OCI-LY7 (cell line): ENCODE measurements at regions of chr3 and their contacts with region 1.

Region 1: DNA sequence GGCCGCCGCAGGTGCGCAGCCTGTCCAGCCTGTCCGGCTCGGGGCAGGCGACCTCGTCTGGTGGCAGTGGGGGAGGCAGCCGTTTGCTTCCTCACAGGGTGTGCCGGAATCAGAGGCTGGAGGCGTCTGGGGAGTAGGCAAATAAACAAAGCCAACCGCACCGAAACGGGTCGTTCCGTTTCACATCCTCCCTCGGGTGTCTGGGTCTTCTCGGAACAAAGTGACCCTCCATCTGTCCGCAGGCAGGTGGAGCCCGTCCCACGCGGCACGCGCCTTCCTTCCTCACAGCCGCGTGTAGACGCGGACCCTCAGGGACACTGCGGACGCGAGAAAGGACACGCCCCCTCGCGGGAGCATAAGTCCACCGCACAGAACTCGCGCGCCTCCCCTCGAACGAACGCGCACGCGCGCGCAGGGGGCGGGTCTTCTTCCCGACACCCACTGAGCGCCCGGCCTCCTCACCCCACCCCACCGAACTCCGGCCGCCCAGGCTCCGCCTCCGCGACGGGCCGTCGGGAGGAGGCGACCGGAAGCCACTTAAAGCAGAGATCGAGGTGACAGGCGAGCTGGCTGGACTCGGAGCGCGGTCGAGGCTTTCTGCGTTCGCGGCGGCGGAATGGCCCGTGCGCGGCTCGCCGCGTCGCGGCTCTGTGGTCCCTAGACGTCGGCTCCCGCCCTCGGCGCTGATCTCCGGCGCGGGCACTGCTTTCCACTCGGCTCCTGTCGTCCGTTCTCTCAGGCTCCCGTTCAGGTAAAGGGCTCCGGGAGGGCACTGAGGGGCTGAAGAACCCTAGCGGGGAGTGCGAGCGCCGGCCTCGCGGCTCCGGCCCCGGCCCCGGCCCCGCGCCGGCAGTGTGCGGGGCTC is at the start of gene TIPARP:
- DNase-seq: peak; percentile 97
- H3K4me3 ChIP-seq: peak within 1 kb of the TSS; percentile 96
- H3K27ac ChIP-seq: peak within 1 kb of the TSS; percentile 77
- H3K4me1 ChIP-seq: peaks cover 39% of the 10 kb centered on the region
- CTCF ChIP-seq: peak; percentile 79
- total RNA-seq, gene TIPARP: 9.7 and 10.0 TPM in 2 replicates

Region 2: DNA sequence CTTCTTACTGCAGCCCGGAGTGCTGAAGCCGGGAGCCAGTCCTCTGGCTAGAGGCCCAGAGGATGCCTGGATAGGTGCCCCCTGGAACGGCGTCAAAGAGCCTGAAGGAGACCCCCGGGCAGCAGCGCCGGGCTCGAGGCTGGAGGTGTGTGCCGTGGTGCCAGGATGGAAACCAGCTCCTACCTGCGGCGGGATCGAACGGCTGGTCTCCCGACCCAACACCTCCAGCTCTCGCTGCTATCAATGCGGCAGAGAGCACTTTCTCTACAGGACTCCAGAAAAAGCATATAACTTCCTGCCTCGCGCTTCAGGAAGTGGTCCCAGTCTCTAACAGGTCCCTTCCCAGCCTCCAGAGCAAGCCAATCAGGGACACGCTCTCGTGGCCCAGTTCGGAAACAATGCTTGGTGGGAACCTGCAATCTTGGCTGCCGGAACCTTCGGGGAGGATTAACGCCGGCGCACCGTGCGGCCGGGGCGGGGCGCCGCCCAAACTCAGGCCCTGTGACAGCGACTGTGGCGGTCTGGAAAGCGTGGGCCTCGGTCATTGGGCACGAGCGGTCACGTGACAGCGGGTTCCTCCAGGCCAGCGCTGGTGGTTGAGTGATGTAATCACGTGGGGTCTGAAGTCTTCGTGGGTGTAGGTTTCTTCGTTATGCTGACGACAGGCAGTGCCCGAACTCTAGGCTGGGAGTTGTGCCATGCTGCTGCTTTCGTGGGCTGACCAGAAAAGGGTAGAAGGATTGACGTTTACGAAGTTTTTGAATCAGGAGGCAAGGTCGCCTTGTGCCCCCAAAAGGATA is 819.9 kb before region 1 on chr3 and contains the start of gene SLC33A1:
- CTCF ChIA-PET with region 1: no interaction called
- POLR2A ChIA-PET with region 1: no interaction called
- intact Hi-C with region 1: loop called (anchors 10 kb)
- DNase-seq: peak; percentile 99
- H3K4me3 ChIP-seq: peak within 1 kb of the TSS; percentile 98
- H3K27ac ChIP-seq: peak within 1 kb of the TSS; percentile 61
- H3K4me1 ChIP-seq: peaks cover 23% of the 10 kb centered on the region
- CTCF ChIP-seq: no peak
- total RNA-seq, gene SLC33A1: 20.9 and 21.9 TPM in 2 replicates

Region 3: GRCh38 chr3:156816800-156817645 is 142.7 kb after region 1 on chr3:
- CTCF ChIA-PET with region 1: no interaction called
- POLR2A ChIA-PET with region 1: interaction called, 6 read pairs
- intact Hi-C with region 1: loop called (anchors 1 kb)
- DNase-seq: peak; percentile 72
- H3K4me3 ChIP-seq: peak overlapping the region; percentile 65
- H3K27ac ChIP-seq: no peak overlapping the region
- H3K4me1 ChIP-seq: peaks cover 6% of the 10 kb centered on the region
- CTCF ChIP-seq: no peak; the same call in 1 of the 2 replicates

Region 4: DNA sequence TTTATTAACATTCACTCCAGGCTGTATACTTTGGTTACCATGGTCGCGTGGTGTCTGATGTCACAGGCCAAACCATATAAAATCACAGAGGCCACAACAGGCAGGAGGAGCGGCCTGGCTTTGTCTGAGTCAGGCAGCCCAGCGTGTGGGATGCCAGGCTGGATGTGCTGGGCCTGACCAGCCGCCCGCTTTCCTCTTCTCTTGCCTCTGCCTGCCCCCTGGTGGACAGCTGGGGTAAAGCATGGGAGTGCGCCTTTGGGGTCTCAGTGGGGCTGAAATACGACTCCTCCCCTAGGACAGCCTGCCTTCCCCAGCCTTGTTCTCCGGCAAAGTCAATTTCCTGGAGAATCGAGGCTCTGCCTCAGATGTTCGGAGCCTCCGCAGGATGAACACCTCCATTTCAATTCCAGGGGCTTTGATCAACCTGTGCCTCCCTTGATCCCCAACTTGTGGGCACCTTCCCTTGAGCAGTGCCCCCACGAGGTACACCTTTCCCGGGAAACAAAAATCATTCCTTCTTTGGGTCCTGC is 407.5 kb after region 1 on chr3:
- CTCF ChIA-PET with region 1: interaction called, 5 read pairs
- POLR2A ChIA-PET with region 1: interaction called, 19 read pairs
- intact Hi-C with region 1: loop called (anchors 1 kb)
- DNase-seq: peak; percentile 79
- H3K4me3 ChIP-seq: no peak overlapping the region
- H3K27ac ChIP-seq: no peak overlapping the region
- H3K4me1 ChIP-seq: peaks cover 3% of the 10 kb centered on the region
- CTCF ChIP-seq: peak; percentile 96

Region 5: DNA sequence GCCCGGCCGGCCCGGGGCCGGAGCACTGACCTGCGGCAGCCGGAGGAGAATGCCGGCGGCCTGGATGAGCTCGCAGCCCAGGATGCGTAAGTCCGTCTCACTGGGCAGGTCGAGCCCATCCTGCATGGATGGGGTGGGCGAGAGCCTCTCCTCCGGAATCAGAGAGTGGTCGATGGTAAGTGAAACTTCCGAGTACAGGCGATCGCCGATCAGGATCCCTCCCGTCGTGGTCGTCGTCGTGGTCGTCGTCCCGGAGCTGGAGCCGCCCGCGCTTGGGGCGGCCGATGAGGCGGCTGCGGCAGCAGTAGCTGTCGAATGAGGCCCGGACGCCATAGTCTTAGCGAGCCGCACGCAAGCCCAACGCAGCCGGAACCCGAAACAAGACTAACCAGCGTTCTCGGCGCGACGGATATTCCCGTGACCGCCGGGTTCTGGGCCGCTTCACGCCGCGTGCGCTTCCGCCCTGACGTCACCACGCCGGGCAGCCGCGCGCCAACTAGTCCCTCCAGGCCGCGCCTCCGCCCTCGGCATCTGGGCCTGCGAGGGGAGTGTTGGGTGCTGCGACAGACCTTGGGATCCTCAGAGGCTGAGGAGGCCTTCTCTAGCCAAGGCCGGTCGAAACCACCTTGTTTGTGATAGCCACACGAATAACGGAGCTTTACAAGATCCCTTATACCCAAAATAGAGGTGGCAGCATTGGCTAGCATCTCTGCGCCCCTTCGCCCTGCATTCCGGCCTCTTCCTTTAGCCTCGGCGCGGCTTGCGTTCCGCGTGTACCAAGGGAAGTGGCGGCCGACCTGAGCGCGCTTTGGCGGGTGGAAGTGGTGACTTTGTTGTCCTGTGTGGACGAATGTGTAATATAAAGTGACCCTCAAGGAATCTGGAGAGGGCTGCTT is 485.7 kb after region 1 on chr3 and contains the start of gene CCNL1:
- CTCF ChIA-PET with region 1: no interaction called
- POLR2A ChIA-PET with region 1: interaction called, 6 read pairs
- intact Hi-C with region 1: loop called (anchors 1 kb)
- DNase-seq: peak; percentile 97
- H3K4me3 ChIP-seq: peak within 1 kb of the TSS; percentile 88
- H3K27ac ChIP-seq: peak within 1 kb of the TSS; percentile 92
- H3K4me1 ChIP-seq: peaks cover 48% of the 10 kb centered on the region
- CTCF ChIP-seq: no peak
- total RNA-seq, gene CCNL1: 221 and 280 TPM in 2 replicates

Region 6: DNA sequence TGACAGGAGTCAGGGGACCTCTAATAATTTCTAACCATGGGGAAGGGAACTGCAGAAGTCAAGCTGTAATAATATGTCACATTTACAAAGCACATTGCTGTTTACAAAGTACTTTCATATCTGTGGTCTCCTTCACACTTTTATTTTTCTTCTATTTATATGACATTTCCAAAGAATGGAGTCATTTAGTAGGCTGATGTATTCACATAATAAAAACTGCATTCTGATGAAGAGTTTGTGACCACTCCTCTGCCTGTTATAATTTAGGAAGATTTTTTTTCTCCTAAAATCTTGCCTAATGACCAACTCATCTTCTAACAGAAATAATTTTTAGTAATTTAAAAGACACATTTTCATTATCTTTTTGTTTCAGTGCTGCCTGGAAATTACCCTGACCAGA is 1101.2 kb after region 1 on chr3:
- CTCF ChIA-PET with region 1: no interaction called
- POLR2A ChIA-PET with region 1: no interaction called
- intact Hi-C with region 1: no loop called
- DNase-seq: no peak
- H3K4me3 ChIP-seq: no peak overlapping the region
- H3K27ac ChIP-seq: no peak overlapping the region
- H3K4me1 ChIP-seq: no peaks in the 10 kb centered on the region
- CTCF ChIP-seq: no peak